Mammary epithelial cell (primary cell): ENCODE measurements at regions of chr5 and their contacts with region 1.

Region 1: GRCh38 chr5:75511435-75512384 is at the starts of genes CERT1 and POLK:
- DNase-seq: peak; percentile 99
- H3K4me3 ChIP-seq: peak within 1 kb of the TSS; percentile 78 to 88 (median 88)
- H3K27ac ChIP-seq: peak within 1 kb of the TSS; percentile 82
- H3K4me1 ChIP-seq: peaks cover 12% of the 10 kb centered on the region
- H3K27me3 ChIP-seq: no peaks in the 10 kb centered on the region
- CTCF ChIP-seq: no peak
- total RNA-seq, gene CERT1: 25.7 to 27.5 TPM
- total RNA-seq, gene POLK: 26.4 to 32.8 TPM

Region 2: GRCh38 chr5:75438722-75439121 is 73.0 kb before region 1 on chr5:
- CTCF ChIA-PET with region 1: no interaction called
- dilution Hi-C with region 1: no loop called
- in situ Hi-C with region 1: no loop called
- intact Hi-C with region 1: loop called (anchors 2 kb)
- DNase-seq: peak; percentile 26
- H3K4me3 ChIP-seq: no peak overlapping the region
- H3K27ac ChIP-seq: no peak overlapping the region
- H3K4me1 ChIP-seq: peaks cover 5% of the 10 kb centered on the region
- H3K27me3 ChIP-seq: no peaks in the 10 kb centered on the region
- CTCF ChIP-seq: peak; percentile 26 to 39

Region 3: GRCh38 chr5:75536147-75537025 is 24.7 kb after region 1 on chr5:
- CTCF ChIA-PET with region 1: no interaction called
- dilution Hi-C with region 1: no loop called
- in situ Hi-C with region 1: no loop called
- intact Hi-C with region 1: no loop called
- DNase-seq: no peak
- H3K4me3 ChIP-seq: no peak overlapping the region
- H3K27ac ChIP-seq: no peak overlapping the region
- H3K4me1 ChIP-seq: peaks cover 13% of the 10 kb centered on the region
- H3K27me3 ChIP-seq: no peaks in the 10 kb centered on the region
- CTCF ChIP-seq: no peak

Region 4: DNA sequence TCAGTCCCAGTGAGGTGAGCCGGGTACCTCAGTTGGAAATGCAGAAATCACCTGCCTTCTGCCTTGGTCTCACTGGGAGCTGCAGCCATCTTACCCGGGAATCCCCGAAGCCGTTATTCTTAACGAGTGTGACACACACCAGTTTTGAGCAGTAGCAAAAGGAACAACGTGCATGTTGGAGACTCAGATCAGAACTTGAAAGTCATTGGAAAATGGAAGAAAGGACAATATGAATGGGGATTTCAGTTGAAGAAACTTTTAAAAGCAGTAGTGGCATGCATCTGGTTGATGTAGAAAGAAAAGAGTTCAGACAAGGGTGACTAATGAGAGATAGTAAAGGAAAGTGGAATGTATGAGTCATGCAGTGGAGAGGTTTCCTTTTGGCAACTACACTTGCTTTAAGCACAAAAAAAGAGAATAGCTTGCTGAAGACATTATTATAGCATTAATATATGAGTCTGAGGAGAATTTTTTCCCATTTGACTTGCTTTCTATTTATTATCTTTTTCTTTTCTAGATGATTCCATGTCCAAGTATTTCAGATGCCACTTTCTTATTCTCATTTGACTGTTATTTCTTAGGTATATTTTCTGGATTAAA is 55.1 kb after region 1 on chr5:
- CTCF ChIA-PET with region 1: no interaction called
- dilution Hi-C with region 1: loop called (anchors 5 kb)
- in situ Hi-C with region 1: no loop called
- intact Hi-C with region 1: loop called (anchors 1 kb)
- DNase-seq: peak; percentile 82
- H3K4me3 ChIP-seq: peak overlapping the region in 2 of 3 experiments; percentile 4 to 23
- H3K27ac ChIP-seq: peak overlapping the region; percentile 24
- H3K4me1 ChIP-seq: peaks cover 26% of the 10 kb centered on the region
- H3K27me3 ChIP-seq: no peaks in the 10 kb centered on the region
- CTCF ChIP-seq: no peak

Region 5: GRCh38 chr5:75681125-75681830 is 169.6 kb after region 1 on chr5:
- CTCF ChIA-PET with region 1: no interaction called
- dilution Hi-C with region 1: no loop called
- in situ Hi-C with region 1: no loop called
- intact Hi-C with region 1: loop called (anchors 1 kb)
- DNase-seq: peak; percentile 40
- H3K4me3 ChIP-seq: peak overlapping the region; percentile 33 to 52 (median 34)
- H3K27ac ChIP-seq: peak overlapping the region; percentile 22
- H3K4me1 ChIP-seq: peaks cover 6% of the 10 kb centered on the region
- H3K27me3 ChIP-seq: no peaks in the 10 kb centered on the region
- CTCF ChIP-seq: peak; percentile 58 to 61